CD4-positive, alpha-beta T cell (primary cell): ENCODE measurements at regions of chr1 and their contacts with region 1.

Region 1: GRCh38 chr1:185574139-185574835 is 159.9 kb upstream of the HMCN1 start:
- DNase-seq: no peak
- ATAC-seq: no peak
- H3K4me3 ChIP-seq: no peak overlapping the region
- H3K4me3 Mint-ChIP-seq: no peak overlapping the region
- H3K27ac ChIP-seq: no peak overlapping the region
- H3K27ac Mint-ChIP-seq: no peak overlapping the region
- H3K4me1 ChIP-seq: peaks cover 6% of the 10 kb centered on the region
- H3K4me1 Mint-ChIP-seq: peaks cover 34% of the 10 kb centered on the region
- H3K27me3 ChIP-seq: no peaks in the 10 kb centered on the region
- H3K27me3 Mint-ChIP-seq: no peaks in the 10 kb centered on the region
- CTCF ChIP-seq: no peak

Region 2: GRCh38 chr1:185559684-185560331 is 14.5 kb before region 1 on chr1:
- CTCF ChIA-PET with region 1: interaction called, 9 read pairs
- POLR2A ChIA-PET with region 1: interaction called, 11 read pairs
- intact Hi-C with region 1: loop called in 1 of 2 experiments (anchors 2 kb)
- DNase-seq: peak in 10 of 14 experiments; percentile 17 to 84 (median 41)
- ATAC-seq: peak; percentile 69
- H3K4me3 ChIP-seq: no peak overlapping the region
- H3K4me3 Mint-ChIP-seq: peak overlapping the region; percentile 63
- H3K27ac ChIP-seq: peak overlapping the region in 1 of 2 donors; percentile 12
- H3K27ac Mint-ChIP-seq: peak overlapping the region; percentile 63
- H3K4me1 ChIP-seq: peaks cover 33% of the 10 kb centered on the region
- H3K4me1 Mint-ChIP-seq: peaks cover 54% of the 10 kb centered on the region
- H3K27me3 ChIP-seq: no peaks in the 10 kb centered on the region
- H3K27me3 Mint-ChIP-seq: no peaks in the 10 kb centered on the region
- CTCF ChIP-seq: no peak